Activated B cell treated with CpG ODN at 0.5 μM for 24 hours (primary cell): ENCODE measurements at regions of chr9 and their contacts with region 1.

Region 1: DNA sequence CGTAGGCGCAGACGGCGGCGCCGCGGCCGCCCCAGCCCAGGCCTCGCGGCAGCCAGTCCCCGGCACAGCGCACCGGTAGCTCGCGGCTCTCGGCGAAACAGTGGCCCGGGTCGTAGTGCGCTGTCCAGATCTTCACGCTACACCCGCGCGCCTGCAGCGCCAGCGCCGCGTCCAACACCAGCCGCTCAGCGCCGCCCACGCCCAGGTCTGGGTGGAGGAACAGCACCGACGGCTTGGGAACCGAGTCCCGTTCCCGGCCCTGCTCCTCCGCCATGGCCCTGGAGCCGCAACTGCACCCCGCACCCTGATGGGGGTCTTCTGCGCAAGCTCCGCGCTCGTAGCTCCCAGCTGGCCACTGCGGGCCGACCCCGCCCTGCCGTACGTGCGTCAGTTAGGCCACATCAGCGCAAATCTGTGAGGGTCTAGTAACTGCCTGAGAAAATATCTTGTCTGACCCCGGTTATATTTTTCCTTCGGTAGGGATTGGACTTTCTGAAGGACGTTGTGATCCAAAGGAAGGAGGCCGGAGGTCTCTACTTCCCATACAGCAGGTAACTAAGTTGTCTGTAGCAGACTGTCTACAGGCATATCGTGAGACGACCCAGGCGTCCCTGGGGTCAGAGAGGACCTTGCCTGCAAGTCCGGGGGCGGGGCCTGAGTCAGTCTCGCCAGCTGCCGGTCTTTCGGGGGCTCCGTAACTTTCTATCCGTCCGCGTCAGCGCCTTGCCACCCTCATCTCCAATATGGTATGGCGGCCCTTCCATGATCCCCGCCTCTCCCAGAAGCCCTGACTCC is at the starts of genes ALG2 and SEC61B:
- DNase-seq: peak; percentile 84
- ATAC-seq: peak; percentile 89
- H3K4me3 Mint-ChIP-seq: peak within 1 kb of the TSS; percentile 97
- H3K27ac Mint-ChIP-seq: peak within 1 kb of the TSS; percentile 100
- H3K4me1 Mint-ChIP-seq: peaks cover 72% of the 10 kb centered on the region
- H3K27me3 Mint-ChIP-seq: no peaks in the 10 kb centered on the region
- CTCF ChIP-seq: no peak
- total RNA-seq, gene ALG2: 51.9 and 54.4 TPM in 2 replicates
- total RNA-seq, gene SEC61B: 200 and 243 TPM in 2 replicates

Region 2: GRCh38 chr9:98536542-98537173 is 685.2 kb before region 1 on chr9:
- CTCF ChIA-PET with region 1: no interaction called
- POLR2A ChIA-PET with region 1: no interaction called
- intact Hi-C with region 1: no loop called
- DNase-seq: no peak
- ATAC-seq: no peak
- H3K4me3 Mint-ChIP-seq: no peak overlapping the region
- H3K27ac Mint-ChIP-seq: no peak overlapping the region
- H3K4me1 Mint-ChIP-seq: no peaks in the 10 kb centered on the region
- H3K27me3 Mint-ChIP-seq: peaks cover 4% of the 10 kb centered on the region
- CTCF ChIP-seq: no peak

Region 3: GRCh38 chr9:98594546-98595160 is 627.2 kb before region 1 on chr9:
- CTCF ChIA-PET with region 1: no interaction called
- POLR2A ChIA-PET with region 1: no interaction called
- intact Hi-C with region 1: no loop called
- DNase-seq: no peak
- ATAC-seq: no peak
- H3K4me3 Mint-ChIP-seq: no peak overlapping the region
- H3K27ac Mint-ChIP-seq: no peak overlapping the region
- H3K4me1 Mint-ChIP-seq: no peaks in the 10 kb centered on the region
- H3K27me3 Mint-ChIP-seq: peaks cover 11% of the 10 kb centered on the region
- CTCF ChIP-seq: no peak

Region 4: DNA sequence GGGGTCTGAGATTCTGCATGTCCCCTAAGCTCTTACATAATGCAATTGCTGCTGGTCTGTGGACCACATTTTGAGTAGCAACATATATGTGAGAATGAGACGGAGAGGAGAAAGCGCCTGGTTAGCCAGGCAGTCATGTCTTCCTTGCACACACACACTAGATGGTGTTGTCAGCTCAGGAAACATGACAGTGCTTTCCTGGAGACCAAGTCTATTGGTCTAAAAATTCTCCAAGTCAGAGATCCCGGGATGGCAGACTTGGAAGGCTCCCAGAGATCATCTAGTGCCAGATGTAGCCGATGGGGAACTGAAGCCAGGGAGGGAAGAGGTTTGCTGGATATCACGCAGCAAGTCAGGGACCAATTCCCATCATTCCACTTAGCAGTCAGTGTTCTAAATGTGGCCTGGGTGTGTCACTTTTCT is 360.9 kb before region 1 on chr9:
- CTCF ChIA-PET with region 1: no interaction called
- POLR2A ChIA-PET with region 1: no interaction called
- intact Hi-C with region 1: no loop called
- DNase-seq: no peak
- ATAC-seq: no peak
- H3K4me3 Mint-ChIP-seq: no peak overlapping the region
- H3K27ac Mint-ChIP-seq: no peak overlapping the region
- H3K4me1 Mint-ChIP-seq: no peaks in the 10 kb centered on the region
- H3K27me3 Mint-ChIP-seq: peaks cover 19% of the 10 kb centered on the region
- CTCF ChIP-seq: no peak

Region 5: DNA sequence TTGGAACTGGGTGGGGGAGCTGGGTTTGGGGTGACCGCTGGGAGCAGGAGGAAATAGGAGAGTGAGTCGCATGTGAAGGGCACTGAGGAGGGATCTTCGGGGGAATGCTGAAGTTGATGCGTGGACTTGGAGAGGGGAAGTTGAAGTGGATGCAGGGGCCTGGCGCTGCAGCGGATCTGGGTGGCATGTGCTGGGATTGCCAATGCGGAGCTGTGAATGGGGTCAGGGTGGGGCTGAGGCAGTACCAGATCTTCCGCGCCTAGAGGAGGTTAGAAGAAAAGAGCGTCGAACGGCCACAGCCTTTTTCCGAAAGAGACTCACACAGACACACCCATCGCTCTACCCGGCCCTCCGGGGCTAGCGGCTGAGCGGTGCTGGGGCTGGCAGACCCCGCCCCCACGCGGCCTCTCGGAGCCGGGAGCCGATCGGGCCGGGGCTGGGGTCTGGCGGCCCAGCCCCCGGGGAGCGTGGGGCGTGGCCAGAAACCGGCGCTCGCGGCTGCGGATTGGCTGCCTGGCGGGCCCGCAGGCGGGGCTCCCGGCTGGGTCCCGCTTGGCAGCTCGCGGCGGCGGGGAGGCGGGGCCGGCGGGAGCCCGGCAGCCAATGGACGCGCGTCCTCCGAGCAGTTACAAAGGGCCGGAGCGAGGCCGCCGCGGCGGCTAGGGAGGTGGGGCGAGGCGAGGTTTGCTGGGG is 117.2 kb before region 1 on chr9 and contains the start of gene TGFBR1:
- CTCF ChIA-PET with region 1: no interaction called
- POLR2A ChIA-PET with region 1: no interaction called
- intact Hi-C with region 1: loop called (anchors 5 kb)
- DNase-seq: peak; percentile 98
- ATAC-seq: peak; percentile 85
- H3K4me3 Mint-ChIP-seq: peak within 1 kb of the TSS; percentile 89
- H3K27ac Mint-ChIP-seq: peak within 1 kb of the TSS; percentile 83
- H3K4me1 Mint-ChIP-seq: peaks cover 50% of the 10 kb centered on the region
- H3K27me3 Mint-ChIP-seq: no peaks in the 10 kb centered on the region
- CTCF ChIP-seq: no peak
- total RNA-seq, gene TGFBR1: 53.5 and 65.3 TPM in 2 replicates

Region 6: DNA sequence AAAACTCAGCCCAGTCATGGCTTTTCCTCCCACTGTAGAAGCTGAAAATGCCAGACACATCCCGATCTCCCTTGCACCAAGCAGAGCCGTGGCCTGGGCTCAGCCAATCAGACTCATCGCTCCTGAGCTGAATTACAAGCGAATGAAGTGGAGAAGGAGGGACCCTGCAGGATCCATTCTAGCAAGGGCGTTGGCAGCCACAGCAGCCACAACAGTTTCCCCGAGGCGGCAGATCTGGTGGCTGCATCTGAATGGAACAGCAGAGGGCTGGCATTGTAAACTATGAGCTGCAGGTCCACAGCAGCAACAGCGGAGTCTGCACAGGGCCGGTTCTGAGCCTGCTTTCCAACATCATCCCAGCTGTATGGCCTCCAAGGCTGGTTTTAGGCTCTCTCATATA is 23.8 kb before region 1 on chr9:
- CTCF ChIA-PET with region 1: no interaction called
- POLR2A ChIA-PET with region 1: interaction called, 20 read pairs
- intact Hi-C with region 1: no loop called
- DNase-seq: no peak
- ATAC-seq: no peak
- H3K4me3 Mint-ChIP-seq: no peak overlapping the region
- H3K27ac Mint-ChIP-seq: no peak overlapping the region
- H3K4me1 Mint-ChIP-seq: peaks cover 14% of the 10 kb centered on the region
- H3K27me3 Mint-ChIP-seq: peaks cover 2% of the 10 kb centered on the region
- CTCF ChIP-seq: no peak

Region 7: GRCh38 chr9:99244344-99245260 is 22.8 kb after region 1 on chr9:
- CTCF ChIA-PET with region 1: no interaction called
- POLR2A ChIA-PET with region 1: interaction called, 16 read pairs
- intact Hi-C with region 1: no loop called
- DNase-seq: no peak
- ATAC-seq: peak; percentile 92
- H3K4me3 Mint-ChIP-seq: peak overlapping the region; percentile 55
- H3K27ac Mint-ChIP-seq: peak overlapping the region; percentile 95
- H3K4me1 Mint-ChIP-seq: peaks cover 51% of the 10 kb centered on the region
- H3K27me3 Mint-ChIP-seq: no peaks in the 10 kb centered on the region
- CTCF ChIP-seq: no peak

Region 8: GRCh38 chr9:99259231-99259918 is 37.6 kb after region 1 on chr9:
- CTCF ChIA-PET with region 1: no interaction called
- POLR2A ChIA-PET with region 1: interaction called, 21 read pairs
- intact Hi-C with region 1: no loop called
- DNase-seq: peak; percentile 19
- ATAC-seq: peak; percentile 60
- H3K4me3 Mint-ChIP-seq: no peak overlapping the region
- H3K27ac Mint-ChIP-seq: peak overlapping the region; percentile 67
- H3K4me1 Mint-ChIP-seq: peaks cover 57% of the 10 kb centered on the region
- H3K27me3 Mint-ChIP-seq: no peaks in the 10 kb centered on the region
- CTCF ChIP-seq: no peak

Region 9: GRCh38 chr9:99307851-99308250 is 86.0 kb after region 1 on chr9:
- CTCF ChIA-PET with region 1: no interaction called
- POLR2A ChIA-PET with region 1: no interaction called
- intact Hi-C with region 1: no loop called
- DNase-seq: no peak
- ATAC-seq: no peak
- H3K4me3 Mint-ChIP-seq: no peak overlapping the region
- H3K27ac Mint-ChIP-seq: no peak overlapping the region
- H3K4me1 Mint-ChIP-seq: no peaks in the 10 kb centered on the region
- H3K27me3 Mint-ChIP-seq: no peaks in the 10 kb centered on the region
- CTCF ChIP-seq: no peak